Activated CD4-positive, alpha-beta T cell treated with anti-CD3 and anti-CD28 coated beads for 36 hours (primary cell): ENCODE measurements at regions of chr19 and their contacts with region 1.

Region 1: GRCh38 chr19:991174-991918 is 7.2 kb downstream of the WDR18 start:
- DNase-seq: peak; percentile 91
- ATAC-seq: peak; percentile 80
- H3K4me3 Mint-ChIP-seq: no peak overlapping the region
- H3K27ac Mint-ChIP-seq: no peak overlapping the region
- H3K4me1 Mint-ChIP-seq: peaks cover 2% of the 10 kb centered on the region
- H3K27me3 Mint-ChIP-seq: no peaks in the 10 kb centered on the region

Region 2: GRCh38 chr19:703651-704446 is 287.5 kb before region 1 on chr19:
- CTCF ChIA-PET with region 1: no interaction called
- POLR2A ChIA-PET with region 1: no interaction called
- intact Hi-C with region 1: loop called in 1 of 2 experiments (anchors 1 kb)
- DNase-seq: peak; percentile 90
- ATAC-seq: peak; percentile 74
- H3K4me3 Mint-ChIP-seq: no peak overlapping the region
- H3K27ac Mint-ChIP-seq: no peak overlapping the region
- H3K4me1 Mint-ChIP-seq: peaks cover 6% of the 10 kb centered on the region
- H3K27me3 Mint-ChIP-seq: peaks cover 14% of the 10 kb centered on the region

Region 3: GRCh38 chr19:1082172-1082927 is 91.0 kb after region 1 on chr19:
- CTCF ChIA-PET with region 1: no interaction called
- POLR2A ChIA-PET with region 1: no interaction called
- intact Hi-C with region 1: loop called in 1 of 2 experiments (anchors 1 kb)
- DNase-seq: peak; percentile 96
- ATAC-seq: peak; percentile 71
- H3K4me3 Mint-ChIP-seq: no peak overlapping the region
- H3K27ac Mint-ChIP-seq: no peak overlapping the region
- H3K4me1 Mint-ChIP-seq: peaks cover 60% of the 10 kb centered on the region
- H3K27me3 Mint-ChIP-seq: no peaks in the 10 kb centered on the region